A673 (cell line): ENCODE measurements at regions of chr10 and their contacts with region 1.

Region 1: GRCh38 chr10:5023177-5023805 is 19.6 kb upstream of the AKR1C2 start:
- DNase-seq: no peak
- H3K4me3 ChIP-seq: no peak overlapping the region
- H3K27ac ChIP-seq: no peak overlapping the region
- H3K4me1 ChIP-seq: peaks cover 18% of the 10 kb centered on the region
- H3K27me3 ChIP-seq: no peaks in the 10 kb centered on the region
- CTCF ChIP-seq: no peak

Region 2: DNA sequence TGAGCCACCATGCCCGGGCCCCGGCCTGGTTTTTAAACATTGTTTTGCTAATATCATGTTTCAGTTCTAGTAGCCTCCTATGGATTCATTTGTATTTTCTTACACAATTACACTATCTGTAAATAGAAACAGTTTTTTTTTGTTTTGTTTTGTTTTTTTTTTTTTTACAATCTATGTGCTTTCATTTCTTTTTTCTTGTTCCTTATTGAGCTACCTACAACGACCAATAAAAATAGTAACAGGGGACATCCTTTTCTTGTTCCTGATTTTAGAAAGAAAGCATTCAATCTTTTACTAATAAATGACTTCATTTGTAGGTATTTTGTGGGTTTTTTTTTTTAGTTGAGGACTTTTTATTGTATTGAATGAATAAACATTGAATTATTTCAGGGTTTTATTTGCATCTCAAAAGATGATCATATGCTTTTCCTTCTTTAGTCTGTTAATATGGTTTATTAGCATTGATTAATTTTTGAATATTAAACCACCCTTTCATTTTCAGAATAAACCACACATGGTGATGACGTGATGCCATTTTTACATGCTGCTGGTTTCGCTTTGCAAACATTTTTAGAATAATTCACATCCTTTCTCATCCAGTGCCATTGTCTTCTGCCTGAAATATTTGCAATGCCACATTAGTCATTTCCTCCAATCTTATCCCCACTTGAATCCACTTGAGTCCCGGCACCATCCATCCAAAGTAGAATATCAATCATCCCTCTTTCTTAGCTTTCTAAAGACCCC is 215.4 kb before region 1 on chr10:
- CTCF ChIA-PET with region 1: no interaction called
- POLR2A ChIA-PET with region 1: no interaction called
- intact Hi-C with region 1: no loop called
- DNase-seq: peak; percentile 90
- H3K4me3 ChIP-seq: no peak overlapping the region
- H3K27ac ChIP-seq: no peak overlapping the region
- H3K4me1 ChIP-seq: peaks cover 13% of the 10 kb centered on the region
- H3K27me3 ChIP-seq: no peaks in the 10 kb centered on the region
- CTCF ChIP-seq: no peak

Region 3: DNA sequence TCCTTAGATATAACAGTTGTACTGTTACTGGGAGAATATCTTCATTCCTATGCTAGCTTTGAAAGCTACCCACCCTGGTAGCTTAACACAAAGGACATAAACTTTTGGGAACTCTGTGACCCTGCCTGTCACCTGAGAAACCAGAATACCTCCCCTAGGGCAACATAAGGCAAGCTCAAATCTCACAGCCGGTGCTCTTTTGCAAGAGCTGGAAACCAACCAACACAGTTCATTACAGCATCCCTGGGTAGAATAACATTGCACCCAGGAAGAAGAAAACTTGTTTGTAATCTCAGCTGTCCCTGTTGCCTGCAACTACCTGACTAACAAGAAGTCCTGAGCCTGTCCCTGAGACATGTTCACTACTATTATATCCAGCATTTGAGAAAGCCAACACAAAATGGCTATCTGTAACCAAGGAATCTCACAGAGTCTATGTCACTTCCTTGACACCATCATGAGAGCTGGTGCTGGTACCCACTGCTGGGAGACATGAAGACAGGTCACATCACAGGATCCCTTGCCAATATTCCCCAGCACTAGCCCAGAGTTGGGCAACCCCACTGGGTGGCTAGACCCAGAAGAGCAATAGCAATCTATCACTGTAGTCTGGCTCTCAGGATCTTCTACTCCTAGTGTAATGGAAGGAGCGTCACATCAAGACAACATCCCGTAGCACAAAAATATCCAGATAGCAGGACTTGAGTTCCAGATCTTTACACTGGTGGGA is 102.2 kb after region 1 on chr10:
- CTCF ChIA-PET with region 1: no interaction called
- POLR2A ChIA-PET with region 1: interaction called, 10 read pairs
- intact Hi-C with region 1: no loop called
- DNase-seq: no peak
- H3K4me3 ChIP-seq: no peak overlapping the region
- H3K27ac ChIP-seq: no peak overlapping the region
- H3K4me1 ChIP-seq: no peaks in the 10 kb centered on the region
- H3K27me3 ChIP-seq: no peaks in the 10 kb centered on the region
- CTCF ChIP-seq: no peak

Region 4: GRCh38 chr10:6176691-6177231 is 1153.5 kb after region 1 on chr10:
- CTCF ChIA-PET with region 1: no interaction called
- POLR2A ChIA-PET with region 1: no interaction called
- intact Hi-C with region 1: no loop called
- DNase-seq: no peak
- H3K4me3 ChIP-seq: no peak overlapping the region
- H3K27ac ChIP-seq: peak overlapping the region; percentile 10
- H3K4me1 ChIP-seq: peaks cover 6% of the 10 kb centered on the region
- H3K27me3 ChIP-seq: no peaks in the 10 kb centered on the region
- CTCF ChIP-seq: no peak